ENCODE measurements at regions of chr12 and their contacts with region 1.

Region 1: GRCh38 chr12:112382232-112382796 is at the start of gene HECTD4:
- DNase-seq: peak; percentile 88 to 100 (median 95)
- ATAC-seq: peak; percentile 99
- H3K4me3 ChIP-seq: peak within 1 kb of the TSS; percentile 83 to 87
- H3K27ac ChIP-seq: peak within 1 kb of the TSS; percentile 82 to 83
- H3K4me1 ChIP-seq: peaks cover 10 to 38% of the 10 kb centered on the region in 2 donors
- H3K27me3 ChIP-seq: no peaks in the 10 kb centered on the region
- CTCF ChIP-seq: no peak
- polyA plus RNA-seq, gene HECTD4: 61.2 to 78.6 (median 66.6) TPM

Region 2: DNA sequence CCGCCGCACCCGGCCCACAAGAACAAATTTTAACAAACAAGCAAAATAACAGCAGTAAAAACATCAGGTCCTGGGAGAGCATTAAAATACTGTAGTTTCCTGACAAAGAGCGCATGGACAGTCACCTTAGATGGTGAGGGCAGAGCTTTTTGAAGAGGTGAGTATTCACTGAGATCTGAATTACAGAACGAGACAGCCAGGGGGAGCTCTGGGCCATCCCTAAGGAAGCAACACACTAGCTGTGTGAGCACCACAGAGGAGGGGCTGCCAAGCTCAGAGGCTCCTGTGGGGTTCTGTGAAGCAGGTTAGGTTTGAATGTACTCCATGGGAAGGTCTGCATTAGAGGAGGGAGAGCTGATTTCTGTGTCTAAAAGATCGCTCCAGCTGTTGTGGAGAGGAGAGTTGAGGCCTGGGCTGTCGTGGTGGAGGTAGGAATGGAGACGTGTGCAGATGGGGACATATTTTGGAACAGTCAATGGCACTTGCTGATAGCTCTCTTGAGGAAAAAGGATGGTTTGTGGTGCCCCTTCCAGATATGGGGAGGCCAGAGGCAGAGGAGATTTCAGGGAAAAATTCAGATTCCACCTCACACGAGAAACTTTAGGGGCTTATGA is 184.1 kb before region 1 on chr12:
- intact Hi-C with region 1: loop called in 1 of 2 experiments (anchors 10 kb)
- DNase-seq: peak in 2 of 4 donors; percentile 14 to 49
- ATAC-seq: peak; percentile 92
- H3K4me3 ChIP-seq: no peak overlapping the region
- H3K27ac ChIP-seq: no peak overlapping the region
- H3K4me1 ChIP-seq: no peaks in the 10 kb centered on the region
- H3K27me3 ChIP-seq: no peaks in the 10 kb centered on the region
- CTCF ChIP-seq: peak; percentile 26 to 39

Measured in left lung (tissue), 14 donors.